ENCODE measurements at regions of chr5 and their contacts with region 1.

Region 1: GRCh38 chr5:140145818-140146522 is 20.2 kb downstream of the IGIP start:
- DNase-seq: peak; percentile 38
- ATAC-seq: peak; percentile 90
- H3K4me3 ChIP-seq: peak overlapping the region; percentile 49 to 69 (median 54); a peak in 4 of 6 replicates
- H3K27ac ChIP-seq: no peak overlapping the region
- H3K4me1 ChIP-seq: peaks cover 50% of the 10 kb centered on the region
- H3K27me3 ChIP-seq: peaks cover 1 to 5% of the 10 kb centered on the region in 2 experiments; a peak in 1 of 5 replicates
- CTCF ChIP-seq: peak; percentile 76
- EP300 ChIP-seq: no peak
- POLR2A ChIP-seq: no peak
- RAD21 ChIP-seq: peak; percentile 89

Region 2: DNA sequence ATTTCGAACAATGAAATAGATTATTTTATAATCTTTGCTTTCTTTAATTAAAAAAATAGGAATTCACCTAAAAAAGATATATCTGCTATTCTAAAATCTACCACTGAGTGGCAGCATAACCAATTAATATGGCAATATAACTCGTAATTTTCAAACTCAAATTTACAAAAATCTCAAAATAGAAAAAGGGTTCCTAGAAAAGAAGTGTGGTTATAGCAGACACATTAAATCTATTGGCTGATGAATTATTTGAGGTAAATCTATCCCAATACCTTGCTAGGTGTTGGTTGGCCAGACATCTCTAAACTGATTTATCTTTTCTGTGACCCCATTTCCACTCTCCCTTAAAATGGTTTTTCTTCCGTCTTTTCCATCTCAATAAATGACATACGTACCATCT is 72.7 kb before region 1 on chr5:
- CTCF ChIA-PET with region 1: interaction called, 37 read pairs
- POLR2A ChIA-PET with region 1: no interaction called
- in situ Hi-C with region 1: no loop called
- intact Hi-C with region 1: loop called (anchors 1 kb)
- DNase-seq: no peak
- ATAC-seq: no peak
- H3K4me3 ChIP-seq: no peak overlapping the region
- H3K27ac ChIP-seq: no peak overlapping the region
- H3K4me1 ChIP-seq: no peaks in the 10 kb centered on the region
- H3K27me3 ChIP-seq: no peaks in the 10 kb centered on the region
- CTCF ChIP-seq: peak; percentile 32; the same call in 1 of the 2 replicates
- EP300 ChIP-seq: no peak
- POLR2A ChIP-seq: no peak
- RAD21 ChIP-seq: no peak

Region 3: DNA sequence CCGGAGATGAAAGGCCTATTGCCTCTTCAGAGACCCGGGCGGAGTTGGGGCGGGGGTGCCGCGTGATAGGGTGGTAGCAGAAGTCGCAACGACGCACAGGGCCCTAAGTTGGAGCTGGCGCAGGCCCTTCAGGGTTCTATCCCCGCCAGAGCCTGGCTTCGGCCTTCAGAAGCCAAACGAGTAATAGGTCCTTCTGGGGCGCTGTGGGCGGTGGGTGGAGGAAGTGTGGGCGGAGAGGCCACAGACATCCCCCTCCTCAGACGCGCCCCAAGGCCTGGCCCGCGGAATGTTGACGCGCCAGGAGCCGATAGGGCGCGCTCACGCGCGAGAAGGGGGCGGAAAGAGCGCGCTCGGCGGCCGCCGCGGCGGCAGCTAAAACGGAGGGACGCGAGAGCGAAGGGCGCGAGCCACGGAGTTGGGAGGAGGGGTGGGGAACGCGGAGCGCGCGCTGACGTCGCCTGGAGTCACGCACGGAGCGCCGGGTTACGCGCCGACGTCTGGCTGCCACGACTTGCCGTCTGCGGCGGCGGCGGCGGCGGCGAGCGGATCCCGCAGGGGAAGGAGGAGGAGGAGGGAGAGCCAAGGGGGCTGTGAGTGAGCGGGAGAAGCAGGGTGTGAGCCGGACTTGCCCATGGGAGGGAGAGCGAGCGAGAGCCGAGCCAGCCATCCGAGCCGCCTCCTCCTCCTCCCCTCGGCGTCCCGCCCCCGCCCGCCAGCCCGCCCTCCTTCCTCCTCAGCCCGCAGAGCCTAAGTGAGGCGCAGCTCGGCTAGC is 38.5 kb before region 1 on chr5:
- CTCF ChIA-PET with region 1: interaction called, 3 read pairs
- POLR2A ChIA-PET with region 1: interaction called, 6 read pairs
- in situ Hi-C with region 1: no loop called
- intact Hi-C with region 1: loop called (anchors 5 kb)
- DNase-seq: peak; percentile 80
- ATAC-seq: peak; percentile 88
- H3K4me3 ChIP-seq: peak overlapping the region; percentile 82 to 95 (median 93)
- H3K27ac ChIP-seq: peak overlapping the region; percentile 82
- H3K4me1 ChIP-seq: peaks cover 45% of the 10 kb centered on the region
- H3K27me3 ChIP-seq: no peaks in the 10 kb centered on the region; a peak in 1 of 5 replicates
- CTCF ChIP-seq: peak; percentile 59
- EP300 ChIP-seq: no peak
- POLR2A ChIP-seq: peak in 1 of 2 experiments; percentile 81; a peak in 2 of 4 replicates
- RAD21 ChIP-seq: peak; percentile 40

Region 4: DNA sequence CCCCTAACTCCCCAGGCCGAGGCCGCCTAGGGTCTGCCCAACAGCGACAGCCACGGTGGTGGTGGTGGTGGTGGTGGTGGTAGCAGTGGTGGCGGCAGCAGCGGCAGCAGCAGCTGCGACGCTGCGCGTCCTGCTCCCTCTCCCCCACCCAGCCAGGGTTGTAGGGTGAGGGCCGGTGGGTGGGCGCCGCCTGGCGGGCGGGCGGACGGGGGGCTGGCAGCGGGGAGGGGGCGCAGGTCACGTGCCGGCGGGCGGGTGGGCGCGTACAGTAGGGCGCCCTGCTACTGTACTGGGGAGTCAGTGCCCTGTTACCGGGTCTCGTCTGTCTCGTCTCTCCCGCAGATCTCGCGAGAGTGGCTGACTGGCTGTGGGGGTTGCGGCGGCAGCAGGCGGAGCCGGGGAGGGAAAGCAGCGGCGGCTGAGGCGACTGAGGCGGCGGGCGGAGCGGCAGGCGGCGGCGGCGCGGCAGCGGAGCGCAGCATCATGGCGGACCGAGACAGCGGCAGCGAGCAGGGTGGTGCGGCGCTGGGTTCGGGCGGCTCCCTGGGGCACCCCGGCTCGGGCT is 32.2 kb before region 1 on chr5 and contains the start of gene PURA:
- CTCF ChIA-PET with region 1: interaction called, 3 read pairs
- POLR2A ChIA-PET with region 1: interaction called, 3 read pairs
- in situ Hi-C with region 1: no loop called
- intact Hi-C with region 1: loop called (anchors 1 kb)
- DNase-seq: peak; percentile 92
- ATAC-seq: peak; percentile 89
- H3K4me3 ChIP-seq: peak within 1 kb of the TSS; percentile 86 to 92 (median 89)
- H3K27ac ChIP-seq: peak within 1 kb of the TSS; percentile 88
- H3K4me1 ChIP-seq: peaks cover 73% of the 10 kb centered on the region
- H3K27me3 ChIP-seq: no peaks in the 10 kb centered on the region; a peak in 1 of 5 replicates
- CTCF ChIP-seq: peak; percentile 73
- EP300 ChIP-seq: no peak
- POLR2A ChIP-seq: no peak; a peak in 1 of 4 replicates
- RAD21 ChIP-seq: no peak
- total RNA-seq, gene PURA: 5.0 and 6.8 TPM in 2 replicates